IMR-90 (cell line): ENCODE measurements at regions of chr15 and their contacts with region 1.

Region 1: DNA sequence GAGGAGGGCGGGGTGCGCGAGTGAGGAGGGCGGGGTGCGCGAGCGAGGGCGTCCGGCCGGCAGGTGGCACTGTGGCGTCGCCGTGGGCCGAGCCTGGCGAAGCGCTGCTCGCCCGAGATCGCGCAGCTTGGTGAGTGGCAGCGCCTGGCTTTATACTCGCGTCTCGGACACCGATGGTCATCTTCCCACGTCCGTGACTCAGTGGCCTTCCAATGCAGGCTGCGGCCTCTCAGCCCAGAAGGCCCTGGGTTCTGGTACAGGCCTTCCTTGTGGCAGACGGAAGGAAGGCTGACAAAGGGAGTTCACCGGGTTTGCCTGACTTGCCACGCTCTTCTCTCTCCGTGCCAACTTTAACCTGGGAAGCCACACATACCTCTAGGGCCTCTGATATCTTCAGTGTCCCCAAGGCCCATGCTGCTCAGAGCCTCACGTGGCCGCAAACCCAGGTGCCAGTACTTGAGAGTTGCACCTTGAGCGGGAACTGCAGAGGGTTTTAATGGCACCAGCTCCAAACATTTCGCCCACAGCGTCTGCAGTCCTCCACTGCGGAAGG is 195.3 kb upstream of the LYSMD4 start:
- DNase-seq: peak; percentile 66
- ATAC-seq: peak; percentile 99
- H3K4me3 ChIP-seq: peak overlapping the region; percentile 54
- H3K27ac ChIP-seq: no peak overlapping the region
- H3K4me1 ChIP-seq: no peaks in the 10 kb centered on the region
- H3K27me3 ChIP-seq: peaks cover 3% of the 10 kb centered on the region; the same call in 1 of the 2 replicates
- CTCF ChIP-seq: peak; percentile 67
- POLR2A ChIP-seq: no peak
- RAD21 ChIP-seq: peak; percentile 79

Region 2: DNA sequence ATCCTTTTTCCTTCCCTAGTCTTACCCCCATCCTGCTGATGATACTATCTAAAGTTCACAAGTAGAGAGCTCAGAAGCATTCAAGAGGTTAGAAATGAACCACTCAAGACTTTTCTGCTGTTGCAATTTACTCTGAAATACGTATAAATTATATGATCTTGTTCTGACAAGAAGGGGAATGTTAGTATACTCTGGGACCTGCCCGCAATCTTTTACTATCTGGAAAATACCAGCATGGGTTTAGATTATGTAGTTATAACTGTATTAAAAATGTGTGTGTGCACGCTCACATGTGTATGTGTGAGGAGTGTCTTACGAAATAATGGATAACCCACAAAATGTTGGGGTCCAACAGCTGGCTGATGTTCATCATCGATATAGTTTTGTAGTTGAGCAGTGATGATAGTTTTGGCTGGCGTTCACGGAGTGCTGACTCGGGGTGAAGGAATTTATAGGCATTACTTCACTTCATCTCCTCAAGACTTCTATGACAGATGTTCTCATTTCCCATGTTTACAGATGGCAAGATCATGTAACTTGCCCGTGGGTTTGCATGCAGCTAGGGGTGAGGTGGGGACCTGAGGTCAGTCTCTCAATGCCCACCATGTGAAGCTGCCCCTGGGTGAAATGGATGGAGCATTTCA is 102.2 kb after region 1 on chr15:
- CTCF ChIA-PET with region 1: no interaction called
- POLR2A ChIA-PET with region 1: no interaction called
- dilution Hi-C with region 1: no loop called
- in situ Hi-C with region 1: no loop called
- intact Hi-C with region 1: no loop called
- DNase-seq: peak; percentile 31
- ATAC-seq: no peak; the same call in 1 of the 2 replicates
- H3K4me3 ChIP-seq: no peak overlapping the region
- H3K27ac ChIP-seq: no peak overlapping the region
- H3K4me1 ChIP-seq: no peaks in the 10 kb centered on the region
- H3K27me3 ChIP-seq: no peaks in the 10 kb centered on the region
- CTCF ChIP-seq: no peak
- POLR2A ChIP-seq: no peak
- RAD21 ChIP-seq: no peak

Region 3: DNA sequence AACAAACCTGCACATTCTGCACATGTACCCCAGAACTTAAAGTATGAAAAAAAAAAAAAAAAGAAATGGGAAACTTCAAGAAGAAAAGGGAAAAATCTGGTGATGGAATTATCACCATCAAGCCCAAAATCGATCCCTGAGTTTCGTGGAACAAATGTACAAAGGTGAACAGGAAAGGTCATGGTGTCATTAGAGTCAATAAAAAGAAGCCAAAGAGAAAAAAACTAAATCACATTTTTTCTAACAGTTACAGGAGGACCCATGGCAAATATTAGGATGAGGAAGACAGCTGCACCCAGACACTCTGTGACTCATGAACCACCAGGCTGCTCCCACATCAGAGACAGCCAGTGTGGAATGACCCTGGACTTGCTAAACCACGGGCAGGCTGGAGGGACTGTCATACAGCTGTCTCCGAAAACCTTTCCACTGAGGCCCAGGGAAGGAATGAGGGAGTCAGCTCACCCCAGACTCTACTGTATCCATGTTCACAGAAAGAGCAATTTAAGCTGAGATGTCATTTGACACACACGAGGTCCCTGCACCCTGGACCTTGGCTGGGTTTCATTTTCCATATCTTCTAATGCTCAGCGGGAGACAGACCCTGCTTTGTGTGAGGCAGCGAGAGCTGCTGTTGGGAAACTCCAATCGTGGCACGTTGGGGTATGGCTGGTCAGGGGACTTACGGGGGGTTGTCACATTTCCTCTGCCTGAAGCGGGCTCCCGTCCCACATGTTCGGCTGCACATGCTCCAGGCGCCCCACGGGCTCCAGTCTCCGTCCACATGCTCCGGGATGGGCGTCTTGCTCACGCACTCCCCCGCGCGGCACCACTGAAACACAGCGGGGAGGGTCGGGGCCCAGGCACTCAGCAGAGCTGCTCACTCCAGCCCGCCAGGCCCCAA is 203.1 kb after region 1 on chr15:
- CTCF ChIA-PET with region 1: no interaction called
- POLR2A ChIA-PET with region 1: no interaction called
- dilution Hi-C with region 1: no loop called
- in situ Hi-C with region 1: no loop called
- intact Hi-C with region 1: loop called (anchors 2 kb)
- DNase-seq: peak; percentile 39
- ATAC-seq: peak; percentile 92
- H3K4me3 ChIP-seq: peak overlapping the region; percentile 31
- H3K27ac ChIP-seq: no peak overlapping the region
- H3K4me1 ChIP-seq: no peaks in the 10 kb centered on the region
- H3K27me3 ChIP-seq: peaks cover 3% of the 10 kb centered on the region
- CTCF ChIP-seq: peak; percentile 43
- POLR2A ChIP-seq: no peak
- RAD21 ChIP-seq: peak; percentile 57

Region 4: DNA sequence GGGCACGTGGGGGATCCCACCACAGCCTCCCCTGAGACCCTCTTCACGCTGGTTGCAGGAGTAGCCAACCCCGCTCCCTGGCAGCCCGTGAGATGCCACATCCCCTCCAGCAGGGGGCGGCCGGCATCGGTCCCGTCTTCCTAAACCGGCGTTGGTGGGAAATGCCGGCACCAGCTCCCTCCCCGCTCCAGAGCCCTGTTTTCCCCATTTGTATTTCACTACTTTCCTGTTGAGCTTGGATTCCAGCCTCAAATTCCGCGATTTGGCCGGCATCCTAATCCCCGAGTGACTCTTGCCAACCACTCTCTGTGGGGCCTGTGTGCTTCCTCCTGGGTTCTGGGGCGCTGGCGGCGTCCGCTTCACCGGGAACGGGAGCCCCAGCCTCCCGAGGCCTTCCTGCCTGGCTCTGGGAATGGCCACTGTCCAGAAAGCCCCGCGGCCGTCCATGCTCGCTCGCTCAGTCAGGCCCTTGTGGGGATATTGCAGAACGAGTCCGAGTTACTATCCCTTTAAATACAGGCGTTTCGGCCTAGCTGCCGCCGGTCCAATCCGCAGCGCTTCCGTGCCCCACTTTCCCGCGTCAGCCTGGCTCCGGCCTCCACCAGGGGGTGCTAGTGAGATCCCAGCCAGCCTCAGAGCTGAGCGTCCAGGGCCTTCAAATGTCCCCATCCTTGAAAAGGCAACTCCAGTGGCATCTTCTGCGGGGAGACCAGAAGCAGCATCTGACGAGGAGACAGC is 421.4 kb after region 1 on chr15:
- CTCF ChIA-PET with region 1: no interaction called
- POLR2A ChIA-PET with region 1: no interaction called
- dilution Hi-C with region 1: no loop called
- in situ Hi-C with region 1: no loop called
- intact Hi-C with region 1: loop called (anchors 10 kb)
- DNase-seq: peak; percentile 55
- ATAC-seq: peak; percentile 98
- H3K4me3 ChIP-seq: peak overlapping the region; percentile 48
- H3K27ac ChIP-seq: no peak overlapping the region
- H3K4me1 ChIP-seq: no peaks in the 10 kb centered on the region
- H3K27me3 ChIP-seq: no peaks in the 10 kb centered on the region
- CTCF ChIP-seq: peak; percentile 80
- POLR2A ChIP-seq: no peak
- RAD21 ChIP-seq: peak; percentile 42

Region 5: GRCh38 chr15:100565591-100565990 is 637.1 kb after region 1 on chr15:
- CTCF ChIA-PET with region 1: no interaction called
- POLR2A ChIA-PET with region 1: no interaction called
- dilution Hi-C with region 1: no loop called
- in situ Hi-C with region 1: loop called (anchors 10 kb)
- intact Hi-C with region 1: no loop called
- DNase-seq: no peak
- ATAC-seq: no peak
- H3K4me3 ChIP-seq: no peak overlapping the region
- H3K27ac ChIP-seq: no peak overlapping the region
- H3K4me1 ChIP-seq: 0 out of 2 replicates have a peak, but pooled peaks cover 2% of the 10 kb centered on the region
- H3K27me3 ChIP-seq: no peaks in the 10 kb centered on the region
- CTCF ChIP-seq: no peak
- POLR2A ChIP-seq: no peak
- RAD21 ChIP-seq: no peak

Region 6: GRCh38 chr15:100572362-100572983 is 644.0 kb after region 1 on chr15:
- CTCF ChIA-PET with region 1: no interaction called
- POLR2A ChIA-PET with region 1: no interaction called
- dilution Hi-C with region 1: no loop called
- in situ Hi-C with region 1: loop called (anchors 10 kb)
- intact Hi-C with region 1: loop called (anchors 2 kb)
- DNase-seq: peak; percentile 23
- ATAC-seq: peak; percentile 48
- H3K4me3 ChIP-seq: no peak overlapping the region
- H3K27ac ChIP-seq: no peak overlapping the region
- H3K4me1 ChIP-seq: 0 out of 2 replicates have a peak, but pooled peaks cover 2% of the 10 kb centered on the region
- H3K27me3 ChIP-seq: no peaks in the 10 kb centered on the region
- CTCF ChIP-seq: peak; percentile 39
- POLR2A ChIP-seq: no peak
- RAD21 ChIP-seq: peak; percentile 1; the same call in 1 of the 2 replicates

Region 7: DNA sequence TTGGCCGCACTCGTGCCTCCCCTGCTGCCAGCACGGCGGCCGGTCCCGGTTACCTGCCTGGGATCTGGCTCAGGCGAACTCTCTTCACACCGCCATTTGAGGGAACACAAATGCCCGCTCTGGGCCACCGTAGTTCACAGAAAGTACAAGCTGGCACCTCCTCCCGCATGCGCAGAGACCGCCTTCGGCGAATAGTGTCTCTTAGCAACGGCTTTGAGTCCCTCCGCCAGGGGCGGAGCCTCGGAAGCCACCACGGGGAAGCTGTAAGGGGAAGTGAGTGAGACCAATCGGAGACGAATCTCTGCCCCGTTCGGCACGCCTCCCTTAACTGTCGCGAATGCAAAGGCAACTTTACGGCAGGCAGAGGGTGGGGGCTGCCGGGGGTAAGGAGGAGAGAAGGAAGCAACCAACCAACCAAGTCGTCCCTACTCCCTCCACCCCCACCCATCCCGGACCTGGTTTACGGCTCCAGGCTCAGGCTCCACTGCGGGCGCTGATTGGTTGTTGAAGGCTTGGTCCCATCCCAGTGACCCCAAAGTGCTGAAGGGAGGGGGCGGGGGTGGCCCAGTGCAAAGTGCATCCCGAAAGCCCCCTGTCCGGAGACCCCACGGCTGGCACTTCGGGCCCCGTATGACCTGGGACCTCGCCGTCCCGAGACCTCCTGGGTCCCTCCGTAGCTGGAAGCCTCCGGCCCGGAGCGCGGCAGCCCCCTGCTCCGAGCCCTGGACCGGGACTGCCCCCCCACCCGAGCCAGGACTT is 673.7 kb after region 1 on chr15 and contains the starts of genes ASB7 and LINS1:
- CTCF ChIA-PET with region 1: no interaction called
- POLR2A ChIA-PET with region 1: no interaction called
- dilution Hi-C with region 1: no loop called
- in situ Hi-C with region 1: no loop called
- intact Hi-C with region 1: loop called (anchors 2 kb)
- DNase-seq: peak; percentile 100
- ATAC-seq: peak; percentile 96
- H3K4me3 ChIP-seq: peak within 1 kb of the TSS; percentile 82
- H3K27ac ChIP-seq: peak within 1 kb of the TSS; percentile 71
- H3K4me1 ChIP-seq: no peaks in the 10 kb centered on the region
- H3K27me3 ChIP-seq: no peaks in the 10 kb centered on the region
- CTCF ChIP-seq: no peak
- POLR2A ChIP-seq: no peak
- RAD21 ChIP-seq: no peak
- total RNA-seq, gene ASB7: 15.8 and 16.7 TPM in 2 replicates
- total RNA-seq, gene LINS1: 10.6 and 14.7 TPM in 2 replicates